ENCODE measurements at regions of chr6 and their contacts with region 1.

Region 1: GRCh38 chr6:96545882-96546281 is 17.0 kb upstream of the FHL5 start:
- DNase-seq: no peak
- ATAC-seq: no peak
- H3K4me3 ChIP-seq: no peak overlapping the region
- H3K27ac ChIP-seq: no peak overlapping the region
- H3K4me1 ChIP-seq: no peaks in the 10 kb centered on the region
- H3K27me3 ChIP-seq: no peaks in the 10 kb centered on the region

Region 2: DNA sequence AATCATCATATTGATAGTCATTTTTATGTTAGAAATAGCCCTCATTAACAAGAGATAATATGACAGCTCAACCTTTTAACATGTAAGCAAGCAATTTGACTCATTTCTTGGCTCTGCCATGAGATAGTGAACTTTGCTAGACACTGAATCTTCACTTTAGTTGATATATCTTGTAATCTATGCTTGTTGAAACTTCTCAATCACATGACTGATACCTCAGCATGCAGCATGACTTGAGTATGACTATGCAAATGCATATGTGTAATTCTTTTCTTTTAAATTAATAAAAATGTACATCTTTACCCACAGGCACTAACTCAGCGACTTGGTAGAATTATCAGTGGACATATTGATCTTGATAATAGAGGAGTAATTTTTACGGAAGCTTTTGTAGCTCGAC is 17.7 kb before region 1 on chr6:
- intact Hi-C with region 1: loop called in 1 of 4 experiments (anchors 2 kb)
- DNase-seq: no peak
- ATAC-seq: no peak
- H3K4me3 ChIP-seq: no peak overlapping the region
- H3K27ac ChIP-seq: no peak overlapping the region
- H3K4me1 ChIP-seq: no peaks in the 10 kb centered on the region
- H3K27me3 ChIP-seq: no peaks in the 10 kb centered on the region

Measured in right cardiac atrium (tissue), 5 donors.